ENCODE measurements at regions of chr14 and their contacts with region 1.

Region 1: DNA sequence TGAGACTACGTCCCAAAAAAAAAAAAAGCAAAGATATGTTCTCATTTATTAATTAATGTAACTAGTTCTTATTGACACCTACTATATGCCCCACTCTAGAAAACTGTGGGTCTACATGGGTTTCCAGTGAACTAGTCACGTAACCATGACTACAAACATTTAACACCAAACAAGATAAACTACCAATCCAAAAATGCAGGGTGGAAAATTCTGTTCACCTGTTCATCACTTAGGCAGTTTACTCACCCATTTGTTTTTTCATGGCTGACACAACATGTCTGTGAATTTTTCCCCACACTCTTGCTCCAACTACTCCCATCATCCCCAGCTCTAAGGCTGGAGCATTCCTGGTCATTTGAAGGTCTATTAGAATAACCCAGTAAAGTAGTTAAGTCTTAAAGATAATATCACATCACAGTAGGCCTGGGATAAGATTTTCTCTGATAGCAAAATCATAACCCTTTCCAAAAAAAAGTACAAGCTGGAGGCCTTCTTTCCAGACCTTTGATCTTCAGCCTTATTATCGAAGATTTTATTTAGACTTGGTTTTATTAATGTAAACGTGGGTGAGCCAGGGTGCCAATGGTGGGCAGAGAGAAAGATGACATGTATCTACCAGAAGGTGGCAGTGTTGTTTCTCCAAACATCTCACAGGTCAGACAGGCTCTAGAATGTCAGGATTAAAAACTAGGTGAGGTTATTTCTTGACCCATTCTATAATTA is 61.6 kb upstream of the DAAM1 start:
- DNase-seq: peak; percentile 25 to 56
- H3K4me3 ChIP-seq: no peak overlapping the region
- H3K27ac ChIP-seq: no peak overlapping the region
- H3K4me1 ChIP-seq: no peaks in the 10 kb centered on the region
- H3K27me3 ChIP-seq: no peaks in the 10 kb centered on the region
- CTCF ChIP-seq: peak; percentile 87

Region 2: DNA sequence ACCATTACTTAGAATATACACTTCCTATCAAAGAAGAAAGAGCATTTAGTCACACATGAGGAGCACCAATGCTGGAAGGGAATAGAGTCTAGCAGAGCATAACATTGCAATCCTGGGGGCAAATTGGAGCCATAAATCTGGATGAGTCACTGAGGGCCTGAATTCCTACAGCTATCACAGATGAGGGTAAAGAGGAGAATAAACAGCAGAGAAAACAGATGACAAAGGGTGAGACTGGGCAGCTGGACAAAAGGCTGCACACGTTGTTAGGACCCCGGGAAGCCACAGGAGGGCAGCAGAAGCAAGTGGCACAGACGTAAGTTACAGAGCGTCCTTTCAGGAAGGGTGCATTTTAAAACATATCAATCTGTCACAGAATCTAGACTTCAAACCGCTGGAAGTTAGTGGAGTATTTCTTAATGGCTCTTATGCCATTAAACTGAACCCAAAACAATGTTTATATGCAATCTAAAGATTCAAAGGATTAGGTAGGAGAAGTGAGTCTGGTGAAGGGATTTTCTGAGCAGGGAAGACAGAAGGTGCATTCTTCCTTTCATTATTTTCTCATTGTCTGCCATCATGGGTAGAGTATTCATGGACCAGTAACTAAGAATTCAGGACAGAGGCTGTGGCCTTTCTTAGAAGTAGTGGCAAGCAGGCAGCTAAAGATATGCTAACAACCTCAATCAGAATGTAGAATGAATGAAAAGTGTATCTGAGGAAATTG is 98.2 kb before region 1 on chr14:
- CTCF ChIA-PET with region 1: interaction called, 3 read pairs
- POLR2A ChIA-PET with region 1: no interaction called
- intact Hi-C with region 1: loop called (anchors 1 kb)
- DNase-seq: peak; percentile 56 to 57
- H3K4me3 ChIP-seq: no peak overlapping the region
- H3K27ac ChIP-seq: no peak overlapping the region
- H3K4me1 ChIP-seq: no peaks in the 10 kb centered on the region
- H3K27me3 ChIP-seq: no peaks in the 10 kb centered on the region
- CTCF ChIP-seq: peak; percentile 79

Region 3: DNA sequence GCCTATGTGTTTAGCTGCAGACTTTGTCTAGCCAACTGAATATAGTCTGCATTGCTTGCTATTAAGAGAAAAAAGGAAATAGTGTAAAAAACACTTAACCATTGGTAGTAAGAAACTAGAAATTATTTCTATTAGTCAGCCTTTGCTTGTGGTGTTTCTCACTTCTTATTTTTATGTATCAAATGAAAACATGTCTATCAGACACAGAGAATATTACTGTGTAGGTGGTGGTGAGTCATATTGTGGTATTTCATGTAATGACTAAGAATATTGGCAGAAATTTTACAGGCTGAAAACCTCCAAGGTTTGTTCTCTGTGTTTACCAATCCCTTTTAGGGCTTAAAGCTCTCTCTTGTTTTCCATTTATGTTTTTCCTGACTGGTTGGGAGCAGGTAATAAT is 148.8 kb after region 1 on chr14:
- CTCF ChIA-PET with region 1: no interaction called
- POLR2A ChIA-PET with region 1: no interaction called
- intact Hi-C with region 1: loop called (anchors 10 kb)
- DNase-seq: peak in 1 of 2 experiments; percentile 90
- H3K4me3 ChIP-seq: no peak overlapping the region
- H3K27ac ChIP-seq: peak overlapping the region; percentile 73
- H3K4me1 ChIP-seq: peaks cover 59% of the 10 kb centered on the region
- H3K27me3 ChIP-seq: no peaks in the 10 kb centered on the region
- CTCF ChIP-seq: no peak

Region 4: GRCh38 chr14:59343585-59343984 is 216.7 kb after region 1 on chr14:
- CTCF ChIA-PET with region 1: no interaction called
- POLR2A ChIA-PET with region 1: no interaction called
- intact Hi-C with region 1: loop called (anchors 5 kb)
- DNase-seq: peak; percentile 32 to 43
- H3K4me3 ChIP-seq: no peak overlapping the region
- H3K27ac ChIP-seq: peak overlapping the region; percentile 81
- H3K4me1 ChIP-seq: peaks cover 43% of the 10 kb centered on the region
- H3K27me3 ChIP-seq: no peaks in the 10 kb centered on the region
- CTCF ChIP-seq: no peak

Region 5: DNA sequence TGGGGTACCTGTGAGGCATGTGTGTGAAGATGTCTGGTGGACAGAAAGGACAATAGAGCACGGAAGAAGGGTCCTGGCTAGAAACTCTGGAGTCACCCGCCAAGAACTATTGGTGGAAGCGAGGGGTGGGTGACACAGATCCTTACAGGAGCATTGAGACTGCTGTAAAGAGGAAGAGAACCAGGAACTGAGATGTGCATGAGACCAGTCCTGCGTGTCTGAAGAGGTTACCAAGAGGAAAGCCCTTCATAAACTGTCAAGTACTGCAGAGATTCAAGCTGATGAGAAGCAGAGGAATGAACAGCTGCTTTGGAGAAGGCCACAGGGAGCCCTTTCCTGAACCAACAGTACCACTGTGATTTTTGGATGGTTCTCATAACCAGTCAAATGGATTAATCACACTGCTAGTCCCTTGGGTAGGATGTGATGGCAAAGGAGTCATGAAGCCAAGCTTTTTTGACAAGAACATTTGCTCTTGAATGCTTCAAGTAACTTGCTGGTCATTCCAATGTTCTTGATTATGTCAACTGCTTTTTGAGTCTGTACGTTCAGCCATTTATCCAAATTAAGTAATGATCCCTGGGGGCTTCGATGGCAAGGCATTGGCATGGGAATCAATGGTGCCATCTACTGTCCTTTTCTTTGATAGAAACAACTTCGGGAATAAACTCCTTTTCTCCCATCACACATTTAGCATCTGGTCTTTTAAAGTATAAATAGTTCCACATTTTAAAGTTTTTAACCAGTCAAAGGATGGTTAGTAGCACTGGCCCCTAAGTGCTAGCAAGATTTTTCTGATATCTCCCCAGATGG is 295.4 kb after region 1 on chr14:
- CTCF ChIA-PET with region 1: no interaction called
- POLR2A ChIA-PET with region 1: no interaction called
- intact Hi-C with region 1: loop called (anchors 1 kb)
- DNase-seq: no peak
- H3K4me3 ChIP-seq: no peak overlapping the region
- H3K27ac ChIP-seq: no peak overlapping the region
- H3K4me1 ChIP-seq: no peaks in the 10 kb centered on the region
- H3K27me3 ChIP-seq: no peaks in the 10 kb centered on the region
- CTCF ChIP-seq: no peak; the same call in 1 of the 2 replicates